GM12878 (cell line): ENCODE measurements at regions of chr7 and their contacts with region 1.

Region 1: GRCh38 chr7:120421151-120421651 is 148.2 kb downstream of the KCND2 start:
- DNase-seq: peak; percentile 91
- ATAC-seq: peak; percentile 91
- H3K4me3 ChIP-seq: no peak overlapping the region; the same call in 1 of the 2 replicates
- H3K27ac ChIP-seq: peak overlapping the region; percentile 69
- H3K4me1 ChIP-seq: peaks cover 27% of the 10 kb centered on the region
- H3K27me3 ChIP-seq: no peaks in the 10 kb centered on the region
- CTCF ChIP-seq: no peak
- EP300 ChIP-seq: peak; percentile 91 to 98
- POLR2A ChIP-seq: no peak
- RAD21 ChIP-seq: no peak; the same call in 1 of the 2 replicates

Region 2: DNA sequence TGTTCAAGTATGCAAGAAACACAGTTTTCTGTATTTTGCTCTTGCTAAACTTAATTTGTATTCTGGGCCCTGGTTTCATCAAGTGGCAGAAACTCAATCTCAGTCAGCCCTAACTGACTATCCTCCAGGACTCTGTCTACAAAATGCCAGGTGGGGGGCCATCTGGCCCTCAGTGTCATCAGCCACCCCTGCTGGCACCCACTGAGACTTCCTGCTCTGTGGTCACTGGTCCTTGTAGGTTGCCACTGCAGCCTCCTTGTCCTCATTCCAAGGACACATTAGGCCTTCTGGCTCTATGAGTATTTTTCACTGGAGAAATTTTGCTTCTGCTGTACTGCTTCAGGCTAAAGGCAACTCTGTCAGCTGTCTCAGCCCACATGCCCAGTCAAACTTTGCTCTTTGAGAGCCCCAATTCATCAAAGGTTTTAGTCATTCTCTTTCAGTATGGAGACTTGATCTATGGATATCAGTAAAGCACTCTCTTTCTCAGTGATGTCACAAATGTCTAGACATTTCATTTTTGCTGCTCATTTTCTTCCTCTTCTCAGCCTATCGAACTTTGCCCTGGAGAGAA is 15.4 kb after region 1 on chr7:
- CTCF ChIA-PET with region 1: interaction called, 7 read pairs
- POLR2A ChIA-PET with region 1: interaction called, 9 read pairs
- RAD21 ChIA-PET with region 1: interaction called, 3 read pairs
- SMC1A ChIA-PET with region 1: interaction called, 12 read pairs
- in situ Hi-C with region 1: no loop called
- intact Hi-C with region 1: no loop called
- DNase-seq: no peak
- ATAC-seq: peak; percentile 48
- H3K4me3 ChIP-seq: no peak overlapping the region
- H3K27ac ChIP-seq: no peak overlapping the region
- H3K4me1 ChIP-seq: peaks cover 24% of the 10 kb centered on the region
- H3K27me3 ChIP-seq: no peaks in the 10 kb centered on the region
- CTCF ChIP-seq: no peak
- EP300 ChIP-seq: no peak
- POLR2A ChIP-seq: no peak
- RAD21 ChIP-seq: no peak

Region 3: GRCh38 chr7:120441850-120442249 is 20.6 kb after region 1 on chr7:
- CTCF ChIA-PET with region 1: interaction called, 7 read pairs
- POLR2A ChIA-PET with region 1: no interaction called
- RAD21 ChIA-PET with region 1: no interaction called
- SMC1A ChIA-PET with region 1: interaction called, 11 read pairs
- in situ Hi-C with region 1: no loop called
- intact Hi-C with region 1: no loop called
- DNase-seq: peak; percentile 44
- ATAC-seq: peak; percentile 90
- H3K4me3 ChIP-seq: peak overlapping the region; percentile 43; the same call in 1 of the 2 replicates
- H3K27ac ChIP-seq: peak overlapping the region; percentile 71
- H3K4me1 ChIP-seq: peaks cover 27% of the 10 kb centered on the region
- H3K27me3 ChIP-seq: no peaks in the 10 kb centered on the region
- CTCF ChIP-seq: no peak
- EP300 ChIP-seq: peak in 1 of 2 experiments; percentile 15; a peak in 1 of 4 replicates
- POLR2A ChIP-seq: no peak
- RAD21 ChIP-seq: no peak

Region 4: GRCh38 chr7:120486164-120486563 is 65.0 kb after region 1 on chr7:
- CTCF ChIA-PET with region 1: no interaction called
- POLR2A ChIA-PET with region 1: no interaction called
- RAD21 ChIA-PET with region 1: no interaction called
- SMC1A ChIA-PET with region 1: no interaction called
- in situ Hi-C with region 1: no loop called
- intact Hi-C with region 1: no loop called
- DNase-seq: no peak
- ATAC-seq: no peak
- H3K4me3 ChIP-seq: no peak overlapping the region
- H3K27ac ChIP-seq: no peak overlapping the region
- H3K4me1 ChIP-seq: no peaks in the 10 kb centered on the region
- H3K27me3 ChIP-seq: no peaks in the 10 kb centered on the region
- CTCF ChIP-seq: no peak
- EP300 ChIP-seq: no peak
- POLR2A ChIP-seq: no peak
- RAD21 ChIP-seq: no peak